OCI-LY7 (cell line): ENCODE measurements at regions of chr2 and their contacts with region 1.

Region 1: GRCh38 chr2:111705711-111706336 is 178.2 kb downstream of the ANAPC1 start:
- DNase-seq: peak; percentile 98
- H3K4me3 ChIP-seq: peak overlapping the region; percentile 43
- H3K27ac ChIP-seq: peak overlapping the region; percentile 94
- H3K4me1 ChIP-seq: peaks cover 100% of the 10 kb centered on the region
- CTCF ChIP-seq: no peak

Region 2: DNA sequence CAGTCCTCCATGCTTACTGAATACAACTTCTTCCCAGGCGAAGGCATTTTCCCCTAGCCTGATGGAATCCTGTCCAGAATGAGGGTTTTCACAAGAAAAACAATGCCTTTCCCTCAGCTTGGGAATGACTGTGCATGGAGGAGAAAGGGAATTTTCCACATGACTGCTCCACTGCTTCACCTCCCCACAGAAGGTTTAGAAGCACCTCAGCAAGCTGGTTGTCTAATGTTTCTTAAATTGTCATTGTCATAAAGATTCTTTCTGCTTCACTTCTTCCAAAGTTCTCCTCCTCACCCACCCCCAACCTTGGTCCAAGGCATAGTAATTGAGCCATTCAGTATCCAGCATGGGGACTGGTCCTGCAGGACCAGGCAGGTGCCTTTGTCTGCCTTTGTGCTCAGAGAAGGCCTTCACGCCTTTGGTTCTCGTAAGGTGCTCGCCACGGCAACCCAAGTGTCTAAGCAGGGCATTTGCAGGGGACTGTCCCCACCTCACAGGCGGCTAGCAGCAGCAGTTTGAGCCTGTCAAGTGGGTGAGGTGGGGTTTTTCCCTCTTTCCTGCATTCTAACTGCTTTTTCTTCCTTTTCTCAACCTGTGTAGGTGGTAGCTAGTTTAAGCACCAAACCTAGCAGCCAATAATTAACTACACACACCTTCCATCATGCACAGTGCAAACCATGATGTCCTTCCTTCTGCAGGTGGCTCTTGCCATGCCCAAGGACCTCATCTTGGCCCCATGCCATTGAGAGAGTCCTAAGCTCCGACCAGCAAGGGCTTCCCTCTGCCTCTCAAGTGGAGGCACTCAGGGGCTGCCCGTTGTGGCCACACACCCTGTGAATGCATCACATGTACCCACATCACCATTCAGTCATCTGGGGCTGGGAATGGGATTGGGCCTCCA is 650.8 kb before region 1 on chr2:
- CTCF ChIA-PET with region 1: no interaction called
- POLR2A ChIA-PET with region 1: no interaction called
- intact Hi-C with region 1: loop called (anchors 5 kb)
- DNase-seq: peak; percentile 40
- H3K4me3 ChIP-seq: peak overlapping the region; percentile 7
- H3K27ac ChIP-seq: peak overlapping the region; percentile 87
- H3K4me1 ChIP-seq: peaks cover 91% of the 10 kb centered on the region
- CTCF ChIP-seq: no peak

Region 3: GRCh38 chr2:111157798-111158197 is 548.0 kb before region 1 on chr2:
- CTCF ChIA-PET with region 1: no interaction called
- POLR2A ChIA-PET with region 1: no interaction called
- intact Hi-C with region 1: loop called (anchors 1 kb)
- DNase-seq: peak; percentile 80
- H3K4me3 ChIP-seq: peak overlapping the region; percentile 45
- H3K27ac ChIP-seq: peak overlapping the region; percentile 89
- H3K4me1 ChIP-seq: peaks cover 50% of the 10 kb centered on the region
- CTCF ChIP-seq: 0 out of 2 replicates have a peak, but pooled peaks have one; percentile 28

Region 4: GRCh38 chr2:111632661-111633060 is 73.2 kb before region 1 on chr2:
- CTCF ChIA-PET with region 1: no interaction called
- POLR2A ChIA-PET with region 1: no interaction called
- intact Hi-C with region 1: no loop called
- DNase-seq: peak; percentile 41
- H3K4me3 ChIP-seq: no peak overlapping the region
- H3K27ac ChIP-seq: no peak overlapping the region
- H3K4me1 ChIP-seq: peaks cover 12% of the 10 kb centered on the region
- CTCF ChIP-seq: no peak

Region 5: DNA sequence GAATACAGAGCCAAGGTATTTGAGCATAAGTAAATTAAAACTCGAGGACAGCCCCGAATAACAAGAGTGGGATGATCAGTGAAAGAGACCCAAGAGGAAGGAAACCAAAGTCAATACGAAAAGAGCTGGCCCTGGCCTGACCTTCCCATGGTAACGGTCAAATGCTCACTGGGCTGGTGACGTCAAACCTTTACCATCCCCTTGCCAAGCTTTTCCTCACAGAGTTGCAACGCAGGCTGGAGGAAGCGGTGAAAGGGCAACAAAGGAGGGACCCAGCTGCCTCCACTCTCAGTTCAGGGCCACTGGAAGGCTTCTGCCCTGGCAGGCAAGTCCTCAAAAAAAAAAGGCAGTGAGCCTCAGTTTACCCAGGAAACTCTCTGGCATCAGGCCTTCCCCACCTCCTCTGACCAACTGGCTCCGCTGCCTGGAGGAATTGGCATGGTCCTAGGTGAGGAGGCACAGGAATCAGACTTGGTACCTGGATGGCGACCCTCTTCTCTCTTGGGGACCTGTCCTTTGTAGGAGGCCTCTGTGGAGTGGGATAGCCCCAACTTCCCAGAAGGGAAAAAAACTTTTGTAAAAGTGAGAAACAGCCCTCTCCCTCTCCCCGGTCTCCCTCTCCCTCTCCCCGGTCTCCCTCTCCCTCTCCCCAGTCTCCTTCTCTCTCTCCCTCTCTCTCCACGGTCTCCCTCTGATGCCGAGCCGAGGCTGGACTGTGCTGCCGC is 34.2 kb before region 1 on chr2:
- CTCF ChIA-PET with region 1: interaction called, 5 read pairs
- POLR2A ChIA-PET with region 1: interaction called, 5 read pairs
- intact Hi-C with region 1: loop called (anchors 1 kb)
- DNase-seq: peak; percentile 35
- H3K4me3 ChIP-seq: no peak overlapping the region
- H3K27ac ChIP-seq: peak overlapping the region; percentile 96
- H3K4me1 ChIP-seq: peaks cover 68% of the 10 kb centered on the region
- CTCF ChIP-seq: no peak